Brain microvascular endothelial cell (primary cell): ENCODE measurements at regions of chr3 and their contacts with region 1.

Region 1: DNA sequence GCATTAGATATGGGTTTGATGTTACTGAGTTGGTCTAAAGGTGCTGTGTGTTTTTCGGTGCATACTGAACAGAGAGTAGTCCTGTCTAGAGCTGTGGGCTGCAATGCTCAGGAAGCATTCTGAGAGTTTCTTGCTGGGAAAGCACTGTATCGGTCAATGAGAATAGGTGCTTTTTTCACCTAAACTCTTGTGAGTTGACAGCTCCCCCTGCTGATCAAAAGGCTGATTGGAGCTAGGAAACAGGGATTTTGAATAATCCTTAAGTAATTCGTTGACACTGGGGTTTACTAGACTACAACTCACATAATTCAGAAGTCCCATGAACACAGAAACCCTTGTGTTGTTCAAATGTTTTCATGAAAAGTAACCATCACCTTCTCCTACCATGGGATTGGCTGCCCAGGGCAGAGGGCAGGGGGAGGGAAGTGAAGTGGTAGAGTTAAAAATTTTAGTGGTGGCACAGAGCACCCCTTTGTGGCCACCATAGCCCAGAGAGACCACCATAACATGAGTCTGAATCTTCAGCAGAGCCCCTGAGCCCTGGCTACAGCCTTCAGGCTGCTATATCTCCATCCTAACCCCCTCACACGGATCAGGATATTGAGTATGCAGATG is 13.0 kb upstream of the MANF start:
- DNase-seq: peak; percentile 69
- H3K4me3 ChIP-seq: no peak overlapping the region
- H3K27ac ChIP-seq: no peak overlapping the region
- H3K27me3 ChIP-seq: no peaks in the 10 kb centered on the region
- CTCF ChIP-seq: peak; percentile 84

Region 2: DNA sequence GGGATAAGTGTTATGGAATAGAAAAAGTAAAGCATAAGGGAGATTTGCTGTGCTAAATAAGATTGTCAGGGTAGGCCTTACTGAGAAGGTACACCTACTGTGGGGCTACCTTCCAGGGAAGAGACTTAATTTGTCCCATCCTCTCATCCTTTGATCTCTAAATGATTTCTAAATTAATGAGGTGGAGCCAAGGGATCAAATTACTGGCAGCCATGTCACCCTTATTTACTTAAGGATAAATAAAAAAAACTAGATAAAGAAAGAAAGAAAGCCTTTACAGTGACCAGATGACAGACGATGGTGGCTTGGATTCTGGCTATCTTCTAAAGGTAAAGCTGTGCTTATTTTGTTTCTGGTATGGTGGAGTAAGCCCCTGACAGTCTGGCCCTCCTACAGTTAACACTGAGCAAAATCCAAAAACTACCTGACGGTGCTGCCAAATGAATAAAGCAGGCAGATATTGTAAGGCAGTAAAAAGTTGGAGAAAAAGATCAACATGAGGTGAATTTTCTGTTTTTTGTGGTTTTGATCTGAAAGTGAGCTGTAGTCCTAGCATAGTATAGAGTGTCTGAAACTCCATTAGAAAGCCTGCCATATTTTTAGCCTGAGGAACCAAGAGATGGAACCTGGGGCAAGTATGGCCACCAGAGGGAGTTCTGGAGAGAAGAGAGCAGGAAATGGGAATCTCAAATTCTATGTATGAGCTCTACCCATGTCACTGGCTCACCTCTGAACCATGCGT is 272.1 kb before region 1 on chr3:
- in situ Hi-C with region 1: loop called (anchors 25 kb)
- DNase-seq: peak; percentile 54
- H3K4me3 ChIP-seq: no peak overlapping the region
- H3K27ac ChIP-seq: no peak overlapping the region
- H3K27me3 ChIP-seq: no peaks in the 10 kb centered on the region
- CTCF ChIP-seq: peak; percentile 86

Region 3: DNA sequence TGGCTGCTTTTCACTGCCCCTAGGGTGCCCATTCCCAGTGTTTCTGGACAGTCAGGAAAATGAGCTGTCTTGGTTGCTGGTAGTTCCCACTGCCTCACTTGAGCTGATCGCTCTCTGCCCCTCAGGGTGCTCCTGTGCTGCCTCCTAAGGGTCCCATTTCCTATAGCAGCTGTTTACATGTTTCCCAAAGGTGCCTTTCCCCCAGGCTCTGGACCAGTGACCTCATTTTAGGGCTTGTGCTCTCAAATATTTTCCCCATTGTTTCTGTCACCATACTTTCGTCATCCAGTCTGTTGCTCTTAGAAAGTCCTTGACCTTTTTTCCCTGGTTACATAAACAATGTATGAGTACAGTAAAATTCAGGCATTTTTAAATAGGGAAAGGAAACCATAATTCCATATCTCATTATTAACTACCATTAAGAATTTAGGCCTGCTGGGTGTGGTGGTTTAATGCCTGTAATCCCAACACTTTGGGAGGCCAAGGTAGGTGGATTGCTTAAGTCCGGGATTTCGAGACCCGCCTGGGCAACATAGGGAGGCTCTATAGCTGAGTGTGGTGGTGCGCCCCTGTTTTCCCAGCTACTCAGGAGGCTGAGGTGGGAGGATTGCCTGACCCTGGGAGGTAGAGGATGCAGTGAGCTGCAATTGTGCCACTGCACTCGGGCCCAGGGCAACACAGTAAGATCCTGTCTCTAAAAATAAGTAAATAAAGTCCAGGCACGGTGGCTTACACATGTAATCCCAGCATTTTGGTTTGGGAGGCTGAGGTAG is 178.2 kb after region 1 on chr3:
- in situ Hi-C with region 1: no loop called
- DNase-seq: no peak
- H3K4me3 ChIP-seq: no peak overlapping the region
- H3K27ac ChIP-seq: no peak overlapping the region
- H3K27me3 ChIP-seq: no peaks in the 10 kb centered on the region
- CTCF ChIP-seq: no peak